ENCODE measurements at regions of chr7 and their contacts with region 1.

Region 1: GRCh38 chr7:95871078-95871782 is 98.9 kb downstream of the DYNC1I1 start:
- DNase-seq: peak; percentile 67
- H3K4me3 ChIP-seq: no peak overlapping the region
- H3K27ac ChIP-seq: no peak overlapping the region
- H3K4me1 ChIP-seq: no peaks in the 10 kb centered on the region; a peak in 1 of 4 replicates
- H3K27me3 ChIP-seq: no peaks in the 10 kb centered on the region
- CTCF ChIP-seq: peak; percentile 91
- EP300 ChIP-seq: no peak
- RAD21 ChIP-seq: peak; percentile 91

Region 2: GRCh38 chr7:95690367-95690947 is 180.8 kb before region 1 on chr7:
- CTCF ChIA-PET with region 1: interaction called, 19 read pairs
- POLR2A ChIA-PET with region 1: no interaction called
- DNase-seq: peak; percentile 27
- H3K4me3 ChIP-seq: peak overlapping the region in 1 of 2 experiments; percentile 23; a peak in 1 of 4 replicates
- H3K27ac ChIP-seq: no peak overlapping the region
- H3K4me1 ChIP-seq: peaks cover 0 to 6% of the 10 kb centered on the region in 2 experiments; a peak in 2 of 4 replicates
- H3K27me3 ChIP-seq: 0 out of 2 replicates have a peak, but pooled peaks cover 7% of the 10 kb centered on the region
- CTCF ChIP-seq: peak; percentile 96
- EP300 ChIP-seq: no peak
- RAD21 ChIP-seq: no peak; the same call in none of the 2 replicates

Region 3: GRCh38 chr7:95730493-95731280 is 140.5 kb before region 1 on chr7:
- CTCF ChIA-PET with region 1: interaction called, 191 read pairs
- POLR2A ChIA-PET with region 1: no interaction called
- DNase-seq: no peak
- H3K4me3 ChIP-seq: no peak overlapping the region
- H3K27ac ChIP-seq: no peak overlapping the region
- H3K4me1 ChIP-seq: no peaks in the 10 kb centered on the region
- H3K27me3 ChIP-seq: 0 out of 2 replicates have a peak, but pooled peaks cover 9% of the 10 kb centered on the region
- CTCF ChIP-seq: no peak
- EP300 ChIP-seq: no peak
- RAD21 ChIP-seq: no peak

Region 4: GRCh38 chr7:95772298-95772770 is 98.9 kb before region 1 on chr7 and contains the start of gene DYNC1I1:
- CTCF ChIA-PET with region 1: interaction called, 17 read pairs
- POLR2A ChIA-PET with region 1: no interaction called
- DNase-seq: peak; percentile 94
- H3K4me3 ChIP-seq: peak within 1 kb of the TSS; percentile 56 to 68
- H3K27ac ChIP-seq: no peak within 1 kb of the TSS
- H3K4me1 ChIP-seq: peaks cover 0 to 4% of the 10 kb centered on the region in 2 experiments; a peak in 1 of 4 replicates
- H3K27me3 ChIP-seq: peaks cover 8% of the 10 kb centered on the region; the same call in 1 of the 2 replicates
- CTCF ChIP-seq: 0 out of 2 replicates have a peak, but pooled peaks have one; percentile 8
- EP300 ChIP-seq: no peak
- RAD21 ChIP-seq: no peak
- polyA plus RNA-seq, gene DYNC1I1: 0.05 and 0.21 TPM in 2 replicates

Region 5: DNA sequence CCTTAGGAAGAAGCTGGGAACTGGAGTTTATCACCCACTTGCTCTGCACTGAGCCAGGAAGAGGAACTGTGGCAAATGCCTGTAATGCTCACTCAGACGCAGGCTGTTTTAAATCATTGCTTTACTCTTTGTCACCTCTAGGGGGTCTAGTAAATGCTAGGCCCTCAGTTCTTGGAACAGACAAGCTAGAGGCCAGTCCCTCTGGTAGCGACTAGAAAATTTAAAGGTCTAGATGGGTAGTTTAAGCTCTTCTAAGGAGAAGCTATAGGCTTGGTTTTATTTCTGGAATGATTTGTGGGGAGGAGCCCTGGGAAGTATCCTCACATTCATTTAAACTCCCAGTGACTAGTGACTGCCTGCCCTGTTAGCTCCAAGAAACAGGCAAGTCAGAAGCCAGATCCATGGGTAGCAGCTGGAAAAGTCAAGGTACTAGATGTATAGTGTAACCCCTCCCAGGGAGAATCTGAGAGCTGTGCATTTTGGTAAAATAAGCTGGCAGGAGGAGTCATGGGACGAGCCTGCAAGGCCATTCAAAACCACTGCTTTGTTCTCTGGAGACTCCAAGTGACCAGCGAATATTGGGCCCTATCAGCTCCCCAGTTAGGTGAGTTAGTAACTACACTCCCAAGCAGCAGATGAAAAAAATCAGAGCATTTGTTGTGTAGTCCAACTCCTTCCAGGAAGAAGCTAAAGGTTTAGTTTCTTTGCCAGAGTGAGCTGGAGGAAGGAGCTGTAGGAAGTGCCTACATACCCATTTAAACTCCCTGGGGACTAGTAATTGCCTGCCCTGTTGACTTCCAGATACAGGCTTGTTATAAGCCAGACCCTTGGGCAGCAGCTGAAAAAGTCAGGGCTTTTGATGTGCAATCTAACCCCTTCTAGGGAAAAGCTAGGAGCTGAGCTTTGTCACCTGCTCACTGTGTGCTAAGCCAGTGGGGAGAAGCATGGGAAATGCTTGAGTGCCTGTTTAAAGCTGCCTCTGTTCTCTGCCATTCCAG is 30.0 kb before region 1 on chr7:
- CTCF ChIA-PET with region 1: interaction called, 12 read pairs
- POLR2A ChIA-PET with region 1: no interaction called
- DNase-seq: peak; percentile 46
- H3K4me3 ChIP-seq: no peak overlapping the region; a peak in 1 of 4 replicates
- H3K27ac ChIP-seq: no peak overlapping the region
- H3K4me1 ChIP-seq: no peaks in the 10 kb centered on the region; a peak in 1 of 4 replicates
- H3K27me3 ChIP-seq: no peaks in the 10 kb centered on the region
- CTCF ChIP-seq: peak; percentile 56
- EP300 ChIP-seq: no peak
- RAD21 ChIP-seq: no peak

Region 6: GRCh38 chr7:95881597-95881996 is 10.4 kb after region 1 on chr7:
- CTCF ChIA-PET with region 1: interaction called, 18 read pairs
- POLR2A ChIA-PET with region 1: no interaction called
- DNase-seq: peak; percentile 36
- H3K4me3 ChIP-seq: no peak overlapping the region
- H3K27ac ChIP-seq: peak overlapping the region in 1 of 2 experiments; percentile 18; a peak in 1 of 4 replicates
- H3K4me1 ChIP-seq: peaks cover 0 to 3% of the 10 kb centered on the region in 2 experiments; a peak in 1 of 4 replicates
- H3K27me3 ChIP-seq: no peaks in the 10 kb centered on the region
- CTCF ChIP-seq: no peak
- EP300 ChIP-seq: peak in 1 of 2 experiments; percentile 70; a peak in 1 of 4 replicates
- RAD21 ChIP-seq: no peak

Region 7: GRCh38 chr7:96441436-96442084 is 570.3 kb after region 1 on chr7:
- CTCF ChIA-PET with region 1: no interaction called
- POLR2A ChIA-PET with region 1: no interaction called
- DNase-seq: no peak
- H3K4me3 ChIP-seq: no peak overlapping the region
- H3K27ac ChIP-seq: no peak overlapping the region
- H3K4me1 ChIP-seq: no peaks in the 10 kb centered on the region
- H3K27me3 ChIP-seq: no peaks in the 10 kb centered on the region
- CTCF ChIP-seq: no peak
- EP300 ChIP-seq: no peak
- RAD21 ChIP-seq: no peak